A549 (cell line): ENCODE measurements at regions of chr17 and their contacts with region 1.

Region 1: DNA sequence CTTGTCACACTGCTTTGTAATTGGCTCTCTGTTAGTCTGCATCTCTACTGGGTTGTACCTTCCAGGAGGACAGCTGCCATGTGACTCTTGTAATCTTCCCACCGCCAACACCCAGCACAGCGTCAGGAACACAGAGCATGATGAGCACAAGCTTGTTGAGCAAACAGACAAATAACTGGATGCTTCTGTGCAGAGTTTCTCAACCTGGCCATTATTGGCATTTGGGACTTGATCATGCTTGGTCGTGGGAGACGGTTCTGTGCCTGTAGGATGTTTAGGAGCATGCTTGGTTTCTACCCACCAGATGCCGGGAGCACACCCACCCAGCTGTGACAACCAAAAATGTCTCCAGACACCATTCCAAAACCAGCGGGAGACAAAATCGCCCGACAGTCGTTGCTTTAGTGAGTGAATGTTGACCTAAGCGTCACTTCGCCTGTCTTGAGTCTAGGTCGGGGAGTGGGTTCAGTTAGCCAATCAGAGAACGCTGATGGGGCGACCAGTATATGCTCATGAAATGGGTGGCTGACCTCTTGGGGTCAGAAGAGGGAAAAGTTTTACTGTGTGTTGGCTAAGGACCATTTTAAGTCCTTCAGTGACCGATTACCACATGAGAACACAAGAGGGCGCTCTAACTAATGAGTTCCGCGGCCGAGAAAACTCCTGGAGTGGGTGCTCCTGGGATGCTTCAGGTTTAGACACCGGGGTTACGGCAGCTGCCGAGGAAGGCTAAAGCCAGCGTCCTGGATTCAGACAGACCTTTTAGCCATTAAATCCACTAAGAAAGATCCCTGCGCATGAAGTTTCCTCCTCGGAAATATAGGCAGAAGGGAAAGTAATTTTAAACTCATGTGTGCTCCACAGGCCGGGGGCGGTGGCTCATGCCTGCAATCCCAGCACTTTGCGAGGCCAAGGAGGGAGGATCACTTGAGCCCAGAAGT is 57.8 kb upstream of the TEX2 start:
- DNase-seq: peak; percentile 89 to 96
- ATAC-seq: peak; percentile 88 to 95
- H3K4me3 ChIP-seq: 0 out of 3 replicates have a peak overlapping the region, but pooled peaks have one; percentile 17
- H3K27ac ChIP-seq: peak overlapping the region; percentile 13 to 40; a peak in 2 of 6 replicates
- H3K4me1 ChIP-seq: no peaks in the 10 kb centered on the region
- CTCF ChIP-seq: peak; percentile 96
- EP300 ChIP-seq: no peak; a peak in 1 of 5 replicates
- POLR2A ChIP-seq: no peak
- RAD21 ChIP-seq: peak; percentile 83 to 87

Region 2: GRCh38 chr17:64107500-64108235 is 213.2 kb before region 1 on chr17:
- CTCF ChIA-PET with region 1: no interaction called
- POLR2A ChIA-PET with region 1: no interaction called
- DNase-seq: no peak
- ATAC-seq: no peak; a peak in 2 of 6 replicates
- H3K4me3 ChIP-seq: no peak overlapping the region
- H3K27ac ChIP-seq: 0 out of 6 replicates have a peak overlapping the region, but pooled peaks have one; percentile 5 to 6
- H3K4me1 ChIP-seq: peaks cover 60% of the 10 kb centered on the region
- CTCF ChIP-seq: no peak
- EP300 ChIP-seq: no peak
- POLR2A ChIP-seq: no peak
- RAD21 ChIP-seq: no peak

Region 3: GRCh38 chr17:64297467-64298098 is 23.3 kb before region 1 on chr17:
- CTCF ChIA-PET with region 1: interaction called, 38 read pairs
- POLR2A ChIA-PET with region 1: no interaction called
- DNase-seq: no peak
- ATAC-seq: no peak
- H3K4me3 ChIP-seq: no peak overlapping the region
- H3K27ac ChIP-seq: no peak overlapping the region
- H3K4me1 ChIP-seq: no peaks in the 10 kb centered on the region
- CTCF ChIP-seq: no peak
- EP300 ChIP-seq: no peak
- POLR2A ChIP-seq: no peak
- RAD21 ChIP-seq: no peak

Region 4: DNA sequence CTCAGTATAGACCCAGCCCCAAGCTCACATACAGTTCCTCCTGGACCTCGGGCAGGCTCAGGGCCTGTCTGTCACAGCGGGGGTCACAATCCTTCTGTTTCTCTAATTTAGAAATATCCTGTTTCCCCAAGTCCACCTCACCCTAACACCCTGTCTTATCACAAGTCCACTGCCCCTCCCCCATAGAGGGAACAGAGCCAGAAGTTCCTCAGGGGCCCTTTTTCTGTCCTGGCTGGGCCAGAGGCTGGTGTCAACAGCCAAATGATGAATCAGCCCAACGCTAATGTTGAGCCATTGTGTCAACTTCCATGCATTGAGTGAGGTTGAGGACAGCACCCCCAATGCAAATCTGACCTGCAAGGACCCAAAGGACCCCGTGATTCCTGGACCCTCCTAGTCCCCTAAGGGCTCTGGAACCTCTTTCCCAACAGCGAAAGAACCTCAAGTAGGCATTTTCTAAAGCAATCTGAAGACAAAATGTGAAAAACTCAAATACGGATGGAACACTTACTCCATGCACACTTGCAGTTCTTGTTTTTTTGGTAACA is 11.1 kb after region 1 on chr17:
- CTCF ChIA-PET with region 1: interaction called, 54 read pairs
- POLR2A ChIA-PET with region 1: no interaction called
- DNase-seq: no peak
- ATAC-seq: no peak
- H3K4me3 ChIP-seq: no peak overlapping the region
- H3K27ac ChIP-seq: peak overlapping the region in 1 of 2 experiments; percentile 50; a peak in 3 of 6 replicates
- H3K4me1 ChIP-seq: peaks cover 14% of the 10 kb centered on the region; the same call in 1 of the 3 replicates
- CTCF ChIP-seq: no peak
- EP300 ChIP-seq: no peak
- POLR2A ChIP-seq: no peak
- RAD21 ChIP-seq: no peak

Region 5: GRCh38 chr17:64357191-64357981 is 36.5 kb after region 1 on chr17:
- CTCF ChIA-PET with region 1: interaction called, 11 read pairs
- POLR2A ChIA-PET with region 1: no interaction called
- DNase-seq: no peak
- ATAC-seq: peak; percentile 14 to 27; a peak in 2 of 6 replicates
- H3K4me3 ChIP-seq: no peak overlapping the region
- H3K27ac ChIP-seq: no peak overlapping the region
- H3K4me1 ChIP-seq: no peaks in the 10 kb centered on the region
- CTCF ChIP-seq: no peak
- EP300 ChIP-seq: no peak
- POLR2A ChIP-seq: no peak
- RAD21 ChIP-seq: no peak

Region 6: GRCh38 chr17:64411999-64412771 is 91.3 kb after region 1 on chr17:
- CTCF ChIA-PET with region 1: interaction called, 776 read pairs
- POLR2A ChIA-PET with region 1: no interaction called
- DNase-seq: no peak
- ATAC-seq: no peak
- H3K4me3 ChIP-seq: no peak overlapping the region
- H3K27ac ChIP-seq: no peak overlapping the region
- H3K4me1 ChIP-seq: no peaks in the 10 kb centered on the region
- CTCF ChIP-seq: no peak
- EP300 ChIP-seq: no peak
- POLR2A ChIP-seq: no peak
- RAD21 ChIP-seq: no peak

Region 7: GRCh38 chr17:64459284-64459747 is 138.4 kb after region 1 on chr17:
- CTCF ChIA-PET with region 1: interaction called, 15 read pairs
- POLR2A ChIA-PET with region 1: no interaction called
- DNase-seq: peak in 1 of 2 experiments; percentile 51
- ATAC-seq: peak; percentile 58 to 73; a peak in 4 of 6 replicates
- H3K4me3 ChIP-seq: no peak overlapping the region
- H3K27ac ChIP-seq: no peak overlapping the region
- H3K4me1 ChIP-seq: peaks cover 5% of the 10 kb centered on the region; the same call in 1 of the 3 replicates
- CTCF ChIP-seq: no peak
- EP300 ChIP-seq: no peak
- POLR2A ChIP-seq: no peak
- RAD21 ChIP-seq: no peak

Region 8: DNA sequence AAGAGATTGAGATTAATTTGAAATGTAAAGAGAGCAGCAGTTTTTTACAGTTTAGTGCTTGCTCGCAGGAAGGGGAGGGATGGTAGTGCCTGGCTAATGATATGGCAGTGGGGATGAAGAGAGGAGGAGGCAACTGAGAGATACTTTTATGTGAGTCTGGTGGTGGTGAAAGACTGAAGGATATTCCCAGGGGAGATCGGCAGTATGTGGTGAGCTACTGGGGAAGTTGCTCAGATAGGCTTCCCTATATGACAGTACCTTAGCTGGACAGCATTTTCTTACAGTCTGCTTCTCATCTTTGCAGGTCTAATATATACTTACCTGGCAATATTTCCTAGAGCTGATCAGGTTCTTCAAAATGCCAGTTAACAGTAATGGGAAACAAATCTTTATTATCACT is 194.5 kb after region 1 on chr17:
- CTCF ChIA-PET with region 1: no interaction called
- POLR2A ChIA-PET with region 1: no interaction called
- DNase-seq: no peak
- ATAC-seq: peak in 1 of 2 experiments; percentile 28; a peak in 3 of 6 replicates
- H3K4me3 ChIP-seq: no peak overlapping the region
- H3K27ac ChIP-seq: no peak overlapping the region
- H3K4me1 ChIP-seq: no peaks in the 10 kb centered on the region
- CTCF ChIP-seq: no peak
- EP300 ChIP-seq: no peak
- POLR2A ChIP-seq: no peak
- RAD21 ChIP-seq: no peak

Region 9: DNA sequence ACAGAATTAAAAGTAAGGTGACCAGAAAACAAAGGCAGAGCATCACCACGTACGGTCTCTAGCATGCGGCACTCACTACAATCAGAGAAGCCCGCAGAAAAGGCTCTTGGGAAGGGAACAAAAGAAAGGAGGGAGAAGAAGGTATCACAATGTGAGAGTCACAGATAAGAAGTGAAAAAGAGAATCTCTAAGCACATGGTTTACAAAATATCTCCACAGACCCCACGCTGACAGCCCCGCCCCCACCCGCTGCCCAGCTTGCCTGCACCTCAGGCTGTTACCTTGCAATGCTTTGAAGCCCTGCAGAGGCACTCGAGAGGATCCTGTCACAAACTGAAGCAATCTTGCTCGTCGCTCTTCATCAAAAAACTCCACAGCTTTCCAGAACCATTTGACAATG is 226.4 kb after region 1 on chr17:
- CTCF ChIA-PET with region 1: no interaction called
- POLR2A ChIA-PET with region 1: no interaction called
- DNase-seq: no peak
- ATAC-seq: 0 out of 6 replicates have a peak, but pooled peaks of 1 of the 2 experiments have one; percentile 32
- H3K4me3 ChIP-seq: no peak overlapping the region
- H3K27ac ChIP-seq: no peak overlapping the region
- H3K4me1 ChIP-seq: no peaks in the 10 kb centered on the region
- CTCF ChIP-seq: no peak
- EP300 ChIP-seq: no peak
- POLR2A ChIP-seq: no peak
- RAD21 ChIP-seq: no peak